ENCODE measurements at regions of chr17 and their contacts with region 1.

Region 1: DNA sequence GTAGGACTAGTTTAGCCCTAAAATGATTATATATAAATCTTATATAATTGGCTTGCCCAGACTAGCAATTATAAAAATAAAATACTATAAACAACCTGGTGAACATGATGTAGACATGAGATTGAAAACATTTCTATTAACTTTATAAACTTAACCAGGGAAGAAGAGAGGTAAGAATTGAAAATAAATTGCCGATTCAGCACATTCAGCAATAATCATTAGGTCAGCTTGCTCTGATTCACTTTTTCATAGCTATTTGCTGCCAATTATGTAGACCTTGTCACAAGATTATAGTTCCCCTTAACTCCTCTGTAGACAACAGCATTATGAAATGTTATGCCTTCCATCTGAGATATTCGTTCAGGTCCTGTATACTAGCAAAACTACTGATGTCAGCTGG is 199.3 kb upstream of the CA10 start:
- DNase-seq: no peak
- H3K4me3 ChIP-seq: no peak overlapping the region
- H3K27ac ChIP-seq: no peak overlapping the region
- H3K4me1 ChIP-seq: no peaks in the 10 kb centered on the region
- H3K27me3 ChIP-seq: no peaks in the 10 kb centered on the region
- CTCF ChIP-seq: no peak

Region 2: GRCh38 chr17:52297230-52298010 is 60.4 kb before region 1 on chr17:
- intact Hi-C with region 1: loop called (anchors 10 kb)
- DNase-seq: no peak
- H3K4me3 ChIP-seq: no peak overlapping the region
- H3K27ac ChIP-seq: no peak overlapping the region
- H3K4me1 ChIP-seq: no peaks in the 10 kb centered on the region
- H3K27me3 ChIP-seq: no peaks in the 10 kb centered on the region
- CTCF ChIP-seq: no peak